ENCODE measurements at regions of chrX and their contacts with region 1.

Region 1: GRCh38 chrX:13750204-13750603 is 15.7 kb downstream of the OFD1 start:
- DNase-seq: peak; percentile 36
- H3K4me3 ChIP-seq: no peak overlapping the region
- H3K27ac ChIP-seq: no peak overlapping the region
- H3K4me1 ChIP-seq: no peaks in the 10 kb centered on the region
- H3K27me3 ChIP-seq: no peaks in the 10 kb centered on the region
- CTCF ChIP-seq: peak; percentile 71
- EP300 ChIP-seq: no peak
- RAD21 ChIP-seq: peak; percentile 60

Region 2: GRCh38 chrX:13734278-13735172 is 15.7 kb before region 1 on chrX and contains the starts of genes OFD1 and TRAPPC2:
- CTCF ChIA-PET with region 1: interaction called, 10 read pairs
- POLR2A ChIA-PET with region 1: no interaction called
- DNase-seq: peak; percentile 96
- H3K4me3 ChIP-seq: peak within 1 kb of the TSS; percentile 85 to 95
- H3K27ac ChIP-seq: peak within 1 kb of the TSS; percentile 86 to 97
- H3K4me1 ChIP-seq: peaks cover 4 to 19% of the 10 kb centered on the region in 2 experiments; a peak in 3 of 4 replicates
- H3K27me3 ChIP-seq: no peaks in the 10 kb centered on the region
- CTCF ChIP-seq: no peak
- EP300 ChIP-seq: 0 out of 4 replicates have a peak, but pooled peaks of 1 of the 2 experiments have one; percentile 4
- RAD21 ChIP-seq: no peak
- polyA plus RNA-seq, gene OFD1: 13.4 and 16.5 TPM in 2 replicates
- polyA plus RNA-seq, gene TRAPPC2: 10.4 and 12.5 TPM in 2 replicates

Region 3: GRCh38 chrX:13764765-13765164 is 14.6 kb after region 1 on chrX:
- CTCF ChIA-PET with region 1: interaction called, 20 read pairs
- POLR2A ChIA-PET with region 1: no interaction called
- DNase-seq: peak; percentile 72
- H3K4me3 ChIP-seq: no peak overlapping the region; a peak in 1 of 4 replicates
- H3K27ac ChIP-seq: no peak overlapping the region
- H3K4me1 ChIP-seq: peaks cover 0 to 2% of the 10 kb centered on the region in 2 experiments; a peak in 1 of 4 replicates
- H3K27me3 ChIP-seq: no peaks in the 10 kb centered on the region
- CTCF ChIP-seq: peak; percentile 37
- EP300 ChIP-seq: no peak
- RAD21 ChIP-seq: peak; percentile 56

Measured in SK-N-SH (cell line).